ENCODE measurements at regions of chr16 and their contacts with region 1.

Region 1: GRCh38 chr16:81366316-81366932 is 51.7 kb downstream of the GAN start:
- DNase-seq: peak; percentile 78
- H3K4me3 Mint-ChIP-seq: no peak overlapping the region
- H3K27ac Mint-ChIP-seq: no peak overlapping the region
- H3K4me1 Mint-ChIP-seq: peaks cover 3% of the 10 kb centered on the region
- H3K27me3 Mint-ChIP-seq: no peaks in the 10 kb centered on the region

Region 2: DNA sequence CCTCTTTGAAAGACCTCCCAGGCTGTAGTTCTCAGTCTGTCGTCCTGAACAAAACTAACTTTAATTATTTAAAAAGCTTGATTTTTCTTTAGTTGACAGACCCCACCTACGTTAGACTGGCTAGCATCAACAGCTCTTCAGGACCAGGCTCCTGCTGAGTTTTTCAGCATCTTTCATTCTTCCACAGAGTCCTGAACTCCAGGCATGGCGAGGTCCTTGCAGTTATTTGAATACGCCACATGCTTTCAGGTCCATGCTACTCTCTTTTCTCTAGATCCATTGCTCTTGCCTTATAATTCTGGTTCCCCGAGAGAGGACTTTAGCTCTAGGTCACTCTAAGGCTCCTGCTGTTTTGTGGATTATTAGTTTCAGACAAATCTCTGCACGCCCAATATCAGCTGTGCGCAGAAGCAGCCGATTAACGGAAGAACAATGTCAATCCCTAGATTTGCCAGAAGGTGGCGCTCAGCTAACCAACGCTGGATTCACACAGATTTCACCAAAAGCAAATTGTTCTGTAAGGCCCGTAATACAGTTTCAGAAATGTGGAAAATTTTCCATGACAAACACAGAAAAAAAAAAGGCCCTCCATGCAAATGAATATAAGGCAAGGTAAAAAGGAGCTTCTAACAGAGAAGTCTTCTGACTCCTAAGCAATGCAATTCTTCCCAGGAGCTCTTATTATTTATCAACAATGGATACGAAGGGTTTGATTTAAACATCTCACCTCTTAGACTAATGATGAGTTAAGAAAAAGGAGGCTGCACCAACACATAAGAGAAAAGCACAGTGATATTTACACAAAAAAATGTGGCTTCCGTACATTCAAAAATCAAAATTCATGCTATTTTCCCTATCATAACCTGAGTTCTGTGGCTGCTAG is 161.4 kb before region 1 on chr16:
- intact Hi-C with region 1: loop called (anchors 5 kb)
- DNase-seq: peak; percentile 80
- H3K4me3 Mint-ChIP-seq: no peak overlapping the region
- H3K27ac Mint-ChIP-seq: no peak overlapping the region
- H3K4me1 Mint-ChIP-seq: no peaks in the 10 kb centered on the region
- H3K27me3 Mint-ChIP-seq: peaks cover 5% of the 10 kb centered on the region

Region 3: DNA sequence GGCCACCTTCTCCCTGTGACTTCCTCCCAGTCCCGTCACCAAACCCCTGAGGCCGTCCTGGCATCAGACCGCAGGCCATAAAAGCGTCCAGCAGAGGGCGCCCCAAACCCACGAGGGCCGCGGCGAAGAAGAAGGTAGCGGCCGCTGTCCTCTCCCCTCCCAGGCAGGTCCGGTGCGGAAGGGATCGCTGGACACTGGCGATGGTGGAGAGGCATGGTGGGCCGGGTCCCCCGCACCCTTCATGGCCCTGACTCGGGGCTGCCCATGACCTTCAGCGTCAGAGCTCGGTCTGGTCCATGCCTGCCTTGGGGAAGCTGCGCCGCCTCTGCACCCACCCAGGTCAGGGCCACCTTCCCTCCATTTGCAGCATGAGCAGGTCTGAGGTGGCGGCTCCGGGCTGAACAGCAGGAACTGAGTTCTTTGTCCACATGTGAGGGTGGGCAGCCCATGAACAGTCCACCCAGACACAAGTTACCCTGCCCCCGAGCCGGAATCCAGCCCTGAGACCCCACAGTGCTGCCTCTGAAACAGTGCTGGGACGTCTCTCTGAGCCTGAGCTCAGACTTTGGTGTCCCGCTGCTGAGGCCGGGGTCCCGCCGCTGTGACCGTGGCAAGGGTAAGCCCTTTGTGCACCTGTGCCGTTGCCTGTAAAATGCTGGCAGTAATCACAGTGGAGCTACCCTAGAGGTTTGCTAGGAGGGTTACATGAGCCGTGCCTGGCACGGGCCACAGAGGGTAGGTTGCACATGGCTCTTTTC is 37.4 kb after region 1 on chr16:
- intact Hi-C with region 1: loop called (anchors 2 kb)
- DNase-seq: peak; percentile 95
- H3K4me3 Mint-ChIP-seq: peak overlapping the region; percentile 39
- H3K27ac Mint-ChIP-seq: no peak overlapping the region
- H3K4me1 Mint-ChIP-seq: peaks cover 2% of the 10 kb centered on the region
- H3K27me3 Mint-ChIP-seq: peaks cover 1% of the 10 kb centered on the region

Region 4: DNA sequence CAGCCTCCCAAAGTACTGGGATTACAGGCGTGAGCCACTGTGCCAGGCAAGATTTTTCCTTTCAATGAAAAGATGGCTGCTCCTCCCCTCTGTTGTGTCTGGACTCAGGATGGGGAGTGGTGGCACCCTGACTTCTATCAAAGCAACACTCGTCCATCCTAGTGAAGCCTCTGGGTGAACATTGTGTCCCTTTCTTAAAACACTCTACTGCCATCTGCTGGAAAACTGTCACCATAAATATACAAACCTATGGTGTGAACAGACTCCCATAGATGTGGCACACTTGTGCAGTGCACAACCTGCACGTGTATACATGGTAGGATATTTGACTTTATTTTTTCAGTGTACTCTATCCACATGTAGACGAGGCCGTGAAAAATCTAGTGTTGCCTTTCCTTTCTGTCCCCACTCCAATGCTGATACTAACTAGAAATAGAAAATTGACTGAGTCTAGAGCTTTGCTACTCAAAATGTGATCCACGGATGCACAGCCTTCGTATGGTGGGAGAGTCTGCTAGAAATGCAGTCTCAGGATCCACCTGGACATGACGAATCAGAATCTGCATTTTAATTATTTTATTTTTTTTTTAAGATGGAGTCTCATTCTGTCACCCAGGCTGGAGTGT is 356.8 kb after region 1 on chr16:
- intact Hi-C with region 1: loop called (anchors 1 kb)
- DNase-seq: peak; percentile 90
- H3K4me3 Mint-ChIP-seq: no peak overlapping the region
- H3K27ac Mint-ChIP-seq: no peak overlapping the region
- H3K4me1 Mint-ChIP-seq: peaks cover 21% of the 10 kb centered on the region
- H3K27me3 Mint-ChIP-seq: peaks cover 3% of the 10 kb centered on the region

Measured in activated CD4-positive, alpha-beta T cell treated with anti-CD3 and anti-CD28 coated beads, Interleukin-2, amount 10 ng/mL, durations not matched to agents 24 days and 14 days (primary cell).